Left cardiac atrium (tissue), 4 donors: ENCODE measurements at regions of chr1 and their contacts with region 1.

Region 1: DNA sequence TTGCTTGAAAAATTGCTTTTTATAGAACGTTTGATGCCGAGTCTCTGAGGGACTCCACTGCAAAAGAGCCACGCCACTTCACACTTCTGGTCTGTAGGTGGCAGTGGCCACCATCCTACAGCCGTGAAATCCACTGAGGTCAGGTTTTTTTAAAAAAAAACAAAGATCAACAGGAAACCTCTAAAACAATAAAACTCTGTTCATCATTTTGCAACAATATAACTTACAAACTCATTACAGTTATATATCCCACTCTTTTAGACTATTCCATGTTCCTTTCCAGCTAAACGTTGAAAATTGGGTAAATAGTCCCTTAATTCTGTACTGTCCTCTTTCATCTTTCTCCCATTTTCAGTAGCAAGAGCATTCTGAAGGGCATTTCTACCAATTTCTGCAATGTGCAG is 64.6 kb upstream of the FMN2 start:
- DNase-seq: peak; percentile 30
- ATAC-seq: peak; percentile 38 to 54

Region 2: GRCh38 chr1:240149484-240150094 is 122.5 kb after region 1 on chr1:
- intact Hi-C with region 1: loop called in 1 of 2 experiments (anchors 5 kb)
- DNase-seq: no peak
- ATAC-seq: no peak

Region 3: GRCh38 chr1:240294566-240294965 is 267.5 kb after region 1 on chr1:
- intact Hi-C with region 1: no loop called
- DNase-seq: no peak
- ATAC-seq: no peak